Activated B cell treated with CpG ODN at 0.5 μM for 24 hours (primary cell): ENCODE measurements at regions of chrX and their contacts with region 1.

Region 1: GRCh38 chrX:78754917-78755316 is 7.4 kb downstream of the LPAR4 start:
- DNase-seq: no peak
- ATAC-seq: peak; percentile 85
- H3K4me3 Mint-ChIP-seq: peak overlapping the region; percentile 56
- H3K27ac Mint-ChIP-seq: peak overlapping the region; percentile 73
- H3K4me1 Mint-ChIP-seq: peaks cover 45% of the 10 kb centered on the region
- H3K27me3 Mint-ChIP-seq: no peaks in the 10 kb centered on the region
- CTCF ChIP-seq: no peak

Region 2: GRCh38 chrX:77768787-77769186 is 986.1 kb before region 1 on chrX:
- CTCF ChIA-PET with region 1: no interaction called
- POLR2A ChIA-PET with region 1: interaction called, 11 read pairs
- intact Hi-C with region 1: no loop called
- DNase-seq: no peak
- ATAC-seq: no peak
- H3K4me3 Mint-ChIP-seq: no peak overlapping the region
- H3K27ac Mint-ChIP-seq: peak overlapping the region; percentile 36
- H3K4me1 Mint-ChIP-seq: peaks cover 24% of the 10 kb centered on the region
- H3K27me3 Mint-ChIP-seq: no peaks in the 10 kb centered on the region
- CTCF ChIP-seq: no peak

Region 3: GRCh38 chrX:78103623-78104446 is 651.1 kb before region 1 on chrX and contains the start of gene PGK1:
- CTCF ChIA-PET with region 1: no interaction called
- POLR2A ChIA-PET with region 1: no interaction called
- intact Hi-C with region 1: loop called (anchors 10 kb)
- DNase-seq: peak; percentile 81
- ATAC-seq: peak; percentile 95
- H3K4me3 Mint-ChIP-seq: peak within 1 kb of the TSS; percentile 87
- H3K27ac Mint-ChIP-seq: peak within 1 kb of the TSS; percentile 90
- H3K4me1 Mint-ChIP-seq: peaks cover 41% of the 10 kb centered on the region
- H3K27me3 Mint-ChIP-seq: peaks cover 2% of the 10 kb centered on the region
- CTCF ChIP-seq: no peak
- total RNA-seq, gene PGK1: 293 and 295 TPM in 2 replicates

Region 4: DNA sequence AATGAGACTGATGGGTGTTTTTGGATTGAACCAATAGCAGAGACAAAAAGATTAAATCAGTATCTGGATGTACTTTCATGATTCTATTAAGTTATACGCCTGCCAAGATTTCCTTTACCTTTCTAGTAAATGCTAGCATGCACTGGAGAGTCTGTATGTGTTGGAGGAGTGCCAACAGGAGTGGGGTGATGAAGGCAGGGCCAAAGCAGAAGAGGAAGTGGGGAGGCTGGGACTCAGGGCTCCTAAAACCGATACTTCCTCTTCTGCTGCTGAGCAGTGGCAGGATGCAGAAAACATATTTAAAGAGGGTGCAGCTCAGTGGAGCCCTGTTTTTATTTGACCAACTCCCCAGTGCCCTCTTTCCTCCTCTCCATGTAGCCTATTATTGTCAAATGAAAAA is 433.1 kb before region 1 on chrX:
- CTCF ChIA-PET with region 1: no interaction called
- POLR2A ChIA-PET with region 1: no interaction called
- intact Hi-C with region 1: loop called (anchors 1 kb)
- DNase-seq: peak; percentile 24
- ATAC-seq: peak; percentile 93
- H3K4me3 Mint-ChIP-seq: peak overlapping the region; percentile 41
- H3K27ac Mint-ChIP-seq: peak overlapping the region; percentile 77
- H3K4me1 Mint-ChIP-seq: peaks cover 61% of the 10 kb centered on the region
- H3K27me3 Mint-ChIP-seq: no peaks in the 10 kb centered on the region
- CTCF ChIP-seq: no peak

Region 5: DNA sequence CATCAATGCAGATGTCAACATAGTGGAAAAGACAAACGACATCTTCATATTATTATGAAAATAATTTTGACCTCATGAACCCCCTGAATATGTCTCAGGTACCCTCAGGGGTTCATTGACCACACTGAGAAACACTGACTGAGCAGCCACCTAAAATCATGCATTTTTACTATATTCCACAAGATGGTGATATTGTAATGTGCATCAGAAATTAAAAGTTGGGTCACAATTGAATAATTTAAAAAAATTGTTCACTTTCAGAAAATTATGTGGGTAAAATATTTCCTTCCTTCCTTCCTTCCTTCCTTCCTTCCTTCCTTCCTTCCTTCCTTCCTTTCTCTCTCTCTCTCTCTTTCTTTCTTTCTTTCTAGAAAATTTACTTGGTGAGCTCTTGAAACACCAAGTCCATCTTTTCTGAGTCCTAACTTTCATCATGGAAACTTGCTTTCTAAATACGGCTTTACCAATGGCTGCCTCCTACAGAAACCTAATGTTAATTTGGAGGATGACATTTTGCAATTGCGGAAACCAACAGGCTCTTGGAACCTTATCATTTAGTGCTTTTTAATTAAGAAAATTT is 199.4 kb before region 1 on chrX:
- CTCF ChIA-PET with region 1: interaction called, 3 read pairs
- POLR2A ChIA-PET with region 1: no interaction called
- intact Hi-C with region 1: loop called (anchors 1 kb)
- DNase-seq: no peak
- ATAC-seq: no peak
- H3K4me3 Mint-ChIP-seq: no peak overlapping the region
- H3K27ac Mint-ChIP-seq: peak overlapping the region; percentile 75
- H3K4me1 Mint-ChIP-seq: peaks cover 13% of the 10 kb centered on the region
- H3K27me3 Mint-ChIP-seq: no peaks in the 10 kb centered on the region
- CTCF ChIP-seq: no peak

Region 6: GRCh38 chrX:79081895-79082512 is 327.1 kb after region 1 on chrX:
- CTCF ChIA-PET with region 1: interaction called, 5 read pairs
- POLR2A ChIA-PET with region 1: no interaction called
- intact Hi-C with region 1: loop called (anchors 2 kb)
- DNase-seq: no peak
- ATAC-seq: peak; percentile 77
- H3K4me3 Mint-ChIP-seq: peak overlapping the region; percentile 0
- H3K27ac Mint-ChIP-seq: peak overlapping the region; percentile 77
- H3K4me1 Mint-ChIP-seq: peaks cover 12% of the 10 kb centered on the region
- H3K27me3 Mint-ChIP-seq: no peaks in the 10 kb centered on the region
- CTCF ChIP-seq: no peak